ENCODE measurements at regions of chr3 and their contacts with region 1.

Region 1: GRCh38 chr3:150495563-150496168 is 50.6 kb downstream of the SERP1 start:
- DNase-seq: peak; percentile 39 to 48
- ATAC-seq: peak in 1 of 2 experiments; percentile 74; a peak in 3 of 6 replicates
- H3K4me3 ChIP-seq: no peak overlapping the region
- H3K27ac ChIP-seq: peak overlapping the region in 1 of 2 experiments; percentile 22; a peak in 1 of 6 replicates
- H3K4me1 ChIP-seq: peaks cover 18% of the 10 kb centered on the region
- CTCF ChIP-seq: peak; percentile 88
- EP300 ChIP-seq: no peak
- POLR2A ChIP-seq: no peak
- RAD21 ChIP-seq: peak; percentile 90 to 94

Region 2: DNA sequence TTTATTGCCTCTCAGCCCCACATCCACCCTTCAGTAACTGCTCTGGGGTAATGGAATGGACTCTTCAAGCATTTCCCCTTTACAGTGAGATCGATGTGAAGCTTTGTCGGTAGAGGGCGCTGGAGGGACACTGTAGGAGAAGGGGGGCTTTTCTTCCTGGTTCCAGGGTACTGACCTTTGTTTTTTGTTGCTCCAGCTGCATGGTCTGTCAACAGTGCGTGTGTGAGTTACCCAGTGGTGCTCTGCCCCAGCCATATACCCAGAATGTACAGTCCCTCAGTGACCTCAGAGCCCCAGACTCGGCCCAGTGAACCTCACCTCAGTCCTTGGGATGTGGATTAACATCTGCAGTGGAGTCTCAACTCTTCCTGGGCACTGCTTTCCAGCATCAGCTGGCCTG is 267.8 kb before region 1 on chr3:
- CTCF ChIA-PET with region 1: interaction called, 22 read pairs
- POLR2A ChIA-PET with region 1: no interaction called
- DNase-seq: peak; percentile 38 to 47
- ATAC-seq: peak; percentile 74 to 88; a peak in 4 of 6 replicates
- H3K4me3 ChIP-seq: no peak overlapping the region
- H3K27ac ChIP-seq: no peak overlapping the region
- H3K4me1 ChIP-seq: no peaks in the 10 kb centered on the region
- CTCF ChIP-seq: peak; percentile 53
- EP300 ChIP-seq: no peak
- POLR2A ChIP-seq: no peak
- RAD21 ChIP-seq: peak; percentile 67 to 84

Region 3: GRCh38 chr3:150238998-150239619 is 256.6 kb before region 1 on chr3:
- CTCF ChIA-PET with region 1: interaction called, 76 read pairs
- POLR2A ChIA-PET with region 1: no interaction called
- DNase-seq: peak; percentile 41 to 68
- ATAC-seq: peak; percentile 77 to 94; a peak in 3 of 6 replicates
- H3K4me3 ChIP-seq: no peak overlapping the region
- H3K27ac ChIP-seq: no peak overlapping the region
- H3K4me1 ChIP-seq: peaks cover 6% of the 10 kb centered on the region; the same call in 1 of the 3 replicates
- CTCF ChIP-seq: peak; percentile 83
- EP300 ChIP-seq: no peak
- POLR2A ChIP-seq: no peak
- RAD21 ChIP-seq: peak; percentile 88 to 93

Region 4: GRCh38 chr3:150286390-150287147 is 209.1 kb before region 1 on chr3:
- CTCF ChIA-PET with region 1: interaction called, 13 read pairs
- POLR2A ChIA-PET with region 1: no interaction called
- DNase-seq: peak; percentile 47 to 75
- ATAC-seq: peak; percentile 96; a peak in 5 of 6 replicates
- H3K4me3 ChIP-seq: no peak overlapping the region
- H3K27ac ChIP-seq: peak overlapping the region; percentile 17 to 42; a peak in 5 of 6 replicates
- H3K4me1 ChIP-seq: no peaks in the 10 kb centered on the region
- CTCF ChIP-seq: peak; percentile 76
- EP300 ChIP-seq: no peak
- POLR2A ChIP-seq: no peak
- RAD21 ChIP-seq: peak; percentile 72 to 77

Region 5: GRCh38 chr3:150414258-150414657 is 81.4 kb before region 1 on chr3:
- CTCF ChIA-PET with region 1: interaction called, 72 read pairs
- POLR2A ChIA-PET with region 1: interaction called, 5 read pairs
- DNase-seq: no peak
- ATAC-seq: no peak
- H3K4me3 ChIP-seq: peak overlapping the region; percentile 78; the same call in 1 of the 3 replicates
- H3K27ac ChIP-seq: no peak overlapping the region
- H3K4me1 ChIP-seq: peaks cover 63% of the 10 kb centered on the region
- CTCF ChIP-seq: no peak
- EP300 ChIP-seq: no peak
- POLR2A ChIP-seq: no peak
- RAD21 ChIP-seq: no peak

Region 6: DNA sequence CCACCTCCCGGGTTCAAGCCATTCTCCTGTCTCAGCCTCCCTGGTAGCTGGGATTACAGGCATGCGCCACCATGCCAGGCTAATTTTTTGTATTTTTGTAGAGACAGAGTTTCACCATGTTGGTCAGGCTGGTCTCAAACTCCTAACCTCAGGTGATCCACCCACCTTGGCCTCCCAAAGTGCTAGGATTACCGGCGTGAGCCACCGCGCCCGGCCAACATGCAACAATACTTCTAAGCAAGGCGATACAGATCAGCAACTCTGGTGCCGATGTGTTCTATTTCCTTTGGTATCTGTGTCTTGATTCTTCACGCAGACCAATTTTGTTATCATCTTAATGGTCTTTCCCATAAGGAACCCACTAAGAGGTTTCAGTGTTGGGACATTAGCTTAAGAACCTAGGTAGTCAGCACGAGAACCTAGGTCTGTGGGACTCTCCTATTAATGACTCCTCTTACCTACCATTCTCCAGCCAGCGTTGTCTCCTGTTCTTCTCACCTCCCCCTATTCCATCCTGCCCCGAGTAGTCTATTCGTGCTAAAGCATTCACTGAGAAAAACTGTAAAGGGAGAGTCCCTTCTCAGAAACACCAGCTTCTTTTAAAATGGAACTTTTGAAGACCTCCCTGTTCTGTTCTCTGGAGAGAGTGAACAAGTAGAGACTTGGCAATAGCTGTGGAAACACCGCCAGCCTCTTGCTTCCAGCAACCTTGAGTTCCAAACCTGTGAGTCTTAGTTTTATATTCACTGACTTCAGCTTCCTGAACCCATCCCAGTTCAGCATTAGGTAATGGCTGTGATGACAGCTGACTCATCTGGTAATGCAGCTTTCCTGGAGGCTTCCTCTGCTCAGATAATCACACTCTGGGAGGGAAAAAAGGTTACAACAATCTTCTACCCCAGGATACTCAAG is 26.4 kb before region 1 on chr3:
- CTCF ChIA-PET with region 1: interaction called, 27 read pairs
- POLR2A ChIA-PET with region 1: no interaction called
- DNase-seq: peak; percentile 80 to 88
- ATAC-seq: peak; percentile 95 to 99
- H3K4me3 ChIP-seq: no peak overlapping the region; the same call in 2 of the 3 replicates
- H3K27ac ChIP-seq: peak overlapping the region; percentile 70 to 83
- H3K4me1 ChIP-seq: peaks cover 30% of the 10 kb centered on the region
- CTCF ChIP-seq: no peak
- EP300 ChIP-seq: peak in 1 of 2 experiments; percentile 29; a peak in 2 of 5 replicates
- POLR2A ChIP-seq: no peak
- RAD21 ChIP-seq: no peak

Region 7: DNA sequence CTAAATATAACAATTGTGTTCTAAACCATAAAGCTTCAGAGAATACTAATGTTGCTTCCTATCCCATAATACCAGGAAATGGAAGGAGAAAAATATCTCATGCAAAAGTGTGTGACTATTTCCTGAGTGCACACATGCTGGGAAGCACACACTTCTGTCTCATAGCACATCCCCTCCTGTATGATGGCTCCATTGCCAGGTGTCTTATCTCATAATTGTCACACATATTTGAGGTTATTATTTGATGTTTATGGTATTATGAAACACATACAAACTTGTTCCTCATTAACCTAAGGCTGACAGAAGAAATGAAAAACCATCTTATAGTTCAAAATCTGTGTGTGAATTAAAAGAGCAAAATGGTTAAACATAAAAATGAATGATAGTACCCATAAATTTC is 14.8 kb before region 1 on chr3:
- CTCF ChIA-PET with region 1: interaction called, 34 read pairs
- POLR2A ChIA-PET with region 1: no interaction called
- DNase-seq: no peak
- ATAC-seq: no peak
- H3K4me3 ChIP-seq: no peak overlapping the region
- H3K27ac ChIP-seq: no peak overlapping the region
- H3K4me1 ChIP-seq: no peaks in the 10 kb centered on the region
- CTCF ChIP-seq: no peak
- EP300 ChIP-seq: no peak
- POLR2A ChIP-seq: no peak
- RAD21 ChIP-seq: no peak

Region 8: GRCh38 chr3:150727653-150728502 is 232.2 kb after region 1 on chr3:
- CTCF ChIA-PET with region 1: no interaction called
- POLR2A ChIA-PET with region 1: no interaction called
- DNase-seq: no peak
- ATAC-seq: no peak
- H3K4me3 ChIP-seq: no peak overlapping the region
- H3K27ac ChIP-seq: no peak overlapping the region
- H3K4me1 ChIP-seq: no peaks in the 10 kb centered on the region; the same call in 2 of the 3 replicates
- CTCF ChIP-seq: no peak
- EP300 ChIP-seq: no peak
- POLR2A ChIP-seq: no peak
- RAD21 ChIP-seq: no peak

Measured in A549 (cell line).